ENCODE measurements at regions of chr19 and their contacts with region 1.

Region 1: DNA sequence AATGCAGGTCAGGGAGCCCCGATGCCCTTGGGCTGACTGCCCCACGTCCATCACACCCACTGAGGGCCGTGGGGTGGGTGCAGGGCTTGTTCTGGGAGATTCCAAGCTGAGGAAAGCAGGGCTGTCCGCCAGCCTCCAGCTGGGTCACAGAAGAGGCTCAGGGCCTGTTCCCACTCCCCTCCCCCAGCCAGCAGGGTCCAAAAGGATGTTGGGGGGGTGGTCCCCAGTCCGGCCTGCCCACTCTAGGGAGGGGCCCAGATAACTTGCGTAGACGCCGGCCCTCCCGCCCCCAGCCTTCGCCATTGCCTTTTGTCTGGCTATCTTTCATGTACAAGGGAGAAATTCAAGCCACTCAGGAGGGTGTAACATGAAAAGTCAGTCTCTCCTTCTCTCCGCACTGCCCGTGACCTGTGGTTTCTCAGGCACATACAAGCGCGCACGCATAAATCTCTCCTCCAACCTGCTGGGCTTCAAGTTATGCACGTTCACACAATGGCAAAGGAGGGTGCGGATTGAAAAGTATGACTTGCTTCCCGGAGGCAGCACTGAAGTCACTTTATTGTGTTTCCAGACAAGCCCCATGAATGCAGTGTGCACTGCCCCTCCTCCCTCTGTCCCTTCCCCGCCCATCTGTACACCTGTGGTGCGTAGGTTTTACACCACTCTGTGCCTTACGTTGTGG is 20.2 kb downstream of the CARM1 start:
- DNase-seq: no peak
- H3K4me3 ChIP-seq: no peak overlapping the region
- H3K27ac ChIP-seq: no peak overlapping the region; the same call in 1 of the 2 replicates
- H3K4me1 ChIP-seq: peaks cover 19 to 55% (median 45%) of the 10 kb centered on the region in 4 experiments
- H3K27me3 ChIP-seq: no peaks in the 10 kb centered on the region
- CTCF ChIP-seq: no peak
- EP300 ChIP-seq: no peak
- POLR2A ChIP-seq: no peak
- RAD21 ChIP-seq: no peak

Region 2: DNA sequence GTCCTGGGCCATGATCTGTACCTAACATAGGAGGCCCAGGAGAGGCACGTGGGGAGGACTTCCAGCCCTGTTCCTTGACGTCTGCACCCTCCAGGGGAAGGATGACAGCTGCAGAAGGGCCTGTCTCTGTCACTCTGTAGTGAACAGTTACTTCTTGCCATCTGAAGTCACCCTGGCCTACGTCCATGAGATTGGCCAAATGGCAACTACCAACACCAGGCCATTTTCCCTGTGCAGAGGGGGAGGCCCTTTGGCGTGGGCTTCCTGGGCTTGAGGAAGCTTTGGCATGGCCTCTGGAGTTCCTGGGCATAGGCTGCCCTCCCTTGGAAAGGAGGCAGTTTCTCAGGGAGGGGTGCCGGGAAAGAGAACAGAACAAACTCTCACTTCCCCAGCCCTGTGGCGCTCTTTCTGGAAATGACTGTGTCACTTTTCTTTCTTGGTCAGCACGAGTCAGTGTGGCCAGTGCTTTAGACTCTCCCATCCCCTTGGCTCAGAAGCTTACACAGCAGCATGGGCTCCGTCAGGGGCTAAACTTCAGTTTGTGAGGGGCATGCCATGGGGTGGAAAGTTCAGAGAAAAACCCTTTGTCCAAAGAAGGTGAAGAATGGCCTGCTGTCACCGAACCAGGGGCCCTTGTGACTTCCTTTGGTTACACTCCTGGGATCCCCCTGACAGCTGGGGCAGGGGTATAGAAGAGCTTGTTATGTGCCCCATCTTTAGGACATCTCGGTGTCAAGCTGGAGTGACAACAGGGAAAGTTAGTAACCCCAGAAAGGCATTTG is 14.9 kb before region 1 on chr19:
- CTCF ChIA-PET with region 1: interaction called, 103 read pairs
- POLR2A ChIA-PET with region 1: interaction called, 72 read pairs
- DNase-seq: no peak
- H3K4me3 ChIP-seq: no peak overlapping the region
- H3K27ac ChIP-seq: peak overlapping the region; percentile 58; the same call in 1 of the 2 replicates
- H3K4me1 ChIP-seq: peaks cover 11 to 31% (median 18%) of the 10 kb centered on the region in 4 experiments
- H3K27me3 ChIP-seq: no peaks in the 10 kb centered on the region
- CTCF ChIP-seq: no peak
- EP300 ChIP-seq: no peak
- POLR2A ChIP-seq: no peak
- RAD21 ChIP-seq: no peak

Region 3: GRCh38 chr19:10928525-10929401 is 37.2 kb after region 1 on chr19 and contains the starts of genes TIMM29 and YIPF2:
- CTCF ChIA-PET with region 1: interaction called, 5 read pairs
- POLR2A ChIA-PET with region 1: interaction called, 16 read pairs
- DNase-seq: peak; percentile 93 to 95
- H3K4me3 ChIP-seq: peak within 1 kb of the TSS; percentile 71 to 95 (median 84)
- H3K27ac ChIP-seq: peak within 1 kb of the TSS; percentile 55; the same call in 1 of the 2 replicates
- H3K4me1 ChIP-seq: peaks cover 0 to 6% (median 1%) of the 10 kb centered on the region in 4 experiments; a peak in 4 of 7 replicates
- H3K27me3 ChIP-seq: no peaks in the 10 kb centered on the region
- CTCF ChIP-seq: peak in 1 of 3 experiments; percentile 17; a peak in 1 of 4 replicates
- EP300 ChIP-seq: peak in 1 of 2 experiments; percentile 84; a peak in 1 of 3 replicates
- POLR2A ChIP-seq: peak in 1 of 2 experiments; percentile 77; a peak in 2 of 3 replicates
- RAD21 ChIP-seq: no peak
- total RNA-seq, gene TIMM29: 22.5 and 24.0 TPM in 2 replicates
- total RNA-seq, gene YIPF2: 47.5 and 48.3 TPM in 2 replicates

Region 4: GRCh38 chr19:11089254-11090053 is 197.9 kb after region 1 on chr19 and contains the start of gene LDLR:
- CTCF ChIA-PET with region 1: no interaction called
- POLR2A ChIA-PET with region 1: no interaction called
- DNase-seq: peak; percentile 84 to 85
- H3K4me3 ChIP-seq: peak within 1 kb of the TSS; percentile 67 to 100 (median 89)
- H3K27ac ChIP-seq: peak within 1 kb of the TSS; percentile 76; the same call in 1 of the 2 replicates
- H3K4me1 ChIP-seq: peaks cover 7 to 15% (median 10%) of the 10 kb centered on the region in 4 experiments
- H3K27me3 ChIP-seq: no peaks in the 10 kb centered on the region
- CTCF ChIP-seq: no peak
- EP300 ChIP-seq: no peak
- POLR2A ChIP-seq: peak; percentile 84 to 85
- RAD21 ChIP-seq: no peak
- total RNA-seq, gene LDLR: 118 and 119 TPM in 2 replicates

Measured in H1 (cell line).